Tibial artery (tissue), 4 donors: ENCODE measurements at regions of chr7 and their contacts with region 1.

Region 1: GRCh38 chr7:149239345-149240191 is at the start of gene ZNF212:
- DNase-seq: peak; percentile 91 to 94
- H3K4me3 ChIP-seq: peak within 1 kb of the TSS; percentile 74 to 96
- H3K27ac ChIP-seq: peak within 1 kb of the TSS; percentile 76 to 80
- H3K4me1 ChIP-seq: peaks cover 0 to 20% (median 16%) of the 10 kb centered on the region in 4 donors
- H3K27me3 ChIP-seq: no peaks in the 10 kb centered on the region
- CTCF ChIP-seq: peak; percentile 80 to 85

Region 2: DNA sequence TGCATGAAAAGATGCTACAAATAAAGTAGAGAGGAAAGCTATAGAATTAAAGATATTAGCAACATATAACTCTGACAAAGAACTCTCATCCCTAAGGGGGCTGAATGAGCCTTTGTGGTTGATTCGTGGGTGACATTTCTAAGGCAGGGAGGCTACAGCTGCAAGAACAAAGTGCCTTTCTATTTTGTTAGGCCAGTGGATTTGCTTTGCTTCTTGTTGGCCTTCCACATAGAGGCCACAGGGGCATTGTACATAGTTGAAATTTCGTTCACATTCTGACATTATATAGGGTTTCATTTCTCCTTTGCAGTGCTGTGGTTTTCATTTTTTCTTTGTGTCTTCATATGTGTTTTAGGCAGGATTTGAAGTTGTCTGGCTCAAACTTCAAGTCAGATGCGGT is 1468.2 kb before region 1 on chr7:
- intact Hi-C with region 1: no loop called
- DNase-seq: no peak
- H3K4me3 ChIP-seq: no peak overlapping the region
- H3K27ac ChIP-seq: no peak overlapping the region
- H3K4me1 ChIP-seq: no peaks in the 10 kb centered on the region
- H3K27me3 ChIP-seq: no peaks in the 10 kb centered on the region
- CTCF ChIP-seq: no peak

Region 3: DNA sequence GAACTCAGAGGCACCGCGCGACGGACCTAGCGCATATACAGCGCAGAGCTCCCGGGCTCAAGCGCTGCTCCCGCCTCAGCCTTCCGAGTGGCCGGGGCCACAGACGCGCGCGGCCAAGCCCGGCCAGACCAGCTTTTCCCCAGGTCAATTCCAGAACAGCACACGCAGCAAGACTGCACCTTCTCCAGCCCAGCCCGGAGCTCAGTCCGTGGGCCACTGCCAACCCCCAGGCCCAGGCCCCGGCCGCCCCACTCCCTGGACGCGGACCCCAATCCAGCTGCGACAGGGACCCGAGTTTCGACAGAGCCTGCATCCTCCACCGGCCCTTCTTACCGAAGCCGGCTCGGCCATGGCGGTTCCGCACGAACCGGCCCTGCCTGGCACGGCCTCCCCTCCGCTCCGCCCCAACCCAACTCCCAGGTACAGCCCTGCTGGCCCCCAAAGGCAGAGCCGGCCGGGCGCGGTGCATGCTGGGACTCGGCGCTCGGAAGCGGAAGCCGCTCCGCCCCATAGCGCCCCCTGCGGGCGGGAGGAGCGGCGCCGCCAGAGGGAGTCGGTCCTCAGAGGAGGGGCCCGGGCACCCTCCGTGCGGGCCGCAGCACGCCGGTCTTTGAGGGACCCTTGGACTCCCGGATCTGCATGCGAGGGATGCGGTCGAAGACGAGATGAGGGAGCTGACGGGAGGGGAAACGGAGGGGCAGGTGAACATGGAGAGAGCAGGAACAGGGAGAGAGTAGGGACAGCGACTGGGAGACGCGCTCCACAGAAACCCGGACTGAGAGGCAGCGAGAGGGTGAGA is 113.5 kb before region 1 on chr7 and contains the start of gene ZNF425:
- intact Hi-C with region 1: no loop called
- DNase-seq: peak; percentile 87 to 96
- H3K4me3 ChIP-seq: peak within 1 kb of the TSS; percentile 75 to 83
- H3K27ac ChIP-seq: peak within 1 kb of the TSS; percentile 98 to 99
- H3K4me1 ChIP-seq: peaks cover 0 to 16% (median 9%) of the 10 kb centered on the region in 4 donors
- H3K27me3 ChIP-seq: no peaks in the 10 kb centered on the region
- CTCF ChIP-seq: peak; percentile 96 to 98

Region 4: DNA sequence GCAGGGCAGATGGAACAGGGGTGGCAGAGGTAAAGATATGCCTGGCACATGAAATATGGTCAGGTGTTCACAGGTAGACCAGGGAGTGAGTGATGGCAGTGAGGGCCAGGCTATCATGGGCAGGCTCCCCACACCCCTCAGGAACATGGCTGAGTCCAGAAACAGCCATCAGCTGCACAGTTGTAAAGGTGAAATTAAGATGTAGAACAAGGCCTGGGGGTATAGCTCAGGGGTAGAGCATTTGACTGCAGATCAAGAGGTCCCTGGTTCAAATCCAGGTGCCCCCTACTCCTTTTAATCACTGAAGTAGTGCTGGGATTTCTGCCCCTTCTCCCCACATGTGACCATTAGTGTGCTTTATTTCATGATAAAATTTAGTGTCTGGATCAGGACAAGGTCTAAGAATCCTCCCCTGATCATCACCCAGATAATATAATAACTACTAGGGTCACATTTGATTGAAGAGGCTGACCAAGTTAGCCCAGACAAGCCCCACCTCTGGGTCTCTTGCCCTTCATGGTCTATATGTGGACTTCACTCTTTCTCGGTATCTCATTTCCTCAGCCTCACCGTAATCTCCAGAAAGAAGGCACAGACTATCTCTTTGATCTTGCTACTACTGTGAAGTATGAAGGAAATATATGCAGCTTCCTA is 91.5 kb after region 1 on chr7:
- intact Hi-C with region 1: no loop called
- DNase-seq: no peak
- H3K4me3 ChIP-seq: no peak overlapping the region
- H3K27ac ChIP-seq: no peak overlapping the region
- H3K4me1 ChIP-seq: no peaks in the 10 kb centered on the region
- H3K27me3 ChIP-seq: no peaks in the 10 kb centered on the region
- CTCF ChIP-seq: no peak

Region 5: GRCh38 chr7:149440222-149440621 is 200.7 kb after region 1 on chr7:
- intact Hi-C with region 1: no loop called
- DNase-seq: no peak
- H3K4me3 ChIP-seq: no peak overlapping the region
- H3K27ac ChIP-seq: no peak overlapping the region
- H3K4me1 ChIP-seq: no peaks in the 10 kb centered on the region
- H3K27me3 ChIP-seq: no peaks in the 10 kb centered on the region
- CTCF ChIP-seq: no peak

Region 6: DNA sequence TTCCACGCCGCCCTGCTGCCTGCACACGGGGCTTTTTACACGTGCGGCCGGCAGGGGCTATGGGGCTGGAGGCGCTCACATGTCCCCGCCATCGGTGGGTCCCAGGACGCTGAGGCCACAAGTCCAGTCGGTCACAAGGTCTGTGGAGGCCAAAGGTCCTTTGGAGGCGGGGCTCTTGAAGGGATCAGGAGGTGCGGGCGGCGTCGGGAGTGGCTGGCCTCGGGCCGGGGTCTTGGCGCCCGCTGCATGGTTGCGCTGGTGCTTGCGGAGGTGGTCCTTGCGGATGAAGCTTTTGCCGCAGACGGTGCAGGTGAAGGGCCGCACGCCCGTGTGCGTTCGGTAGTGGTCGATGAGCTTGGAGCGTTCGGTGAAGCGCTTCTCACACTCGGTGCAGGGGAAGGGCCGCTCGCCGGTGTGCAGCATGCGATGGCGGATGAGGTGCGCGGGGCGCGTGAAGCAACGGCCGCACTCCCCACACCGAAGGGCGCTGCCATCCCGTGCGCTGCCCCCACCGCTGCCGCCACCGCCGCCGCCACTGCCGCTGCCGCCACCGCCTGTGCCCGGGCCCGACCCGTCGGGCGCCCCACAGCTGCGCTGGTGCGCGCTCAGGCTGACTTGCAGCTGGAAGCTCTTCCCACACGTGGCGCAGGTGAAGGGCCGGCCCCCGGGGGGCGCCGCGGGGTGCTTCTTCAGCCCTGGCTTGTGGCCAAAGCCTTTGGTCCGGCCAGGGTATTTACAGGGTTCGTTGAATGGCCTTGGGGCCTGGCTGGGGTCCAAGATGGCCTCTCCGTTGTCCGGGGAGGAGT is 234.9 kb after region 1 on chr7:
- intact Hi-C with region 1: loop called (anchors 5 kb)
- DNase-seq: no peak
- H3K4me3 ChIP-seq: no peak overlapping the region
- H3K27ac ChIP-seq: no peak overlapping the region
- H3K4me1 ChIP-seq: no peaks in the 10 kb centered on the region
- H3K27me3 ChIP-seq: no peaks in the 10 kb centered on the region
- CTCF ChIP-seq: no peak